Left ventricle myocardium superior (tissue), 1 donor: ENCODE measurements at regions of chr2 and their contacts with region 1.

Region 1: DNA sequence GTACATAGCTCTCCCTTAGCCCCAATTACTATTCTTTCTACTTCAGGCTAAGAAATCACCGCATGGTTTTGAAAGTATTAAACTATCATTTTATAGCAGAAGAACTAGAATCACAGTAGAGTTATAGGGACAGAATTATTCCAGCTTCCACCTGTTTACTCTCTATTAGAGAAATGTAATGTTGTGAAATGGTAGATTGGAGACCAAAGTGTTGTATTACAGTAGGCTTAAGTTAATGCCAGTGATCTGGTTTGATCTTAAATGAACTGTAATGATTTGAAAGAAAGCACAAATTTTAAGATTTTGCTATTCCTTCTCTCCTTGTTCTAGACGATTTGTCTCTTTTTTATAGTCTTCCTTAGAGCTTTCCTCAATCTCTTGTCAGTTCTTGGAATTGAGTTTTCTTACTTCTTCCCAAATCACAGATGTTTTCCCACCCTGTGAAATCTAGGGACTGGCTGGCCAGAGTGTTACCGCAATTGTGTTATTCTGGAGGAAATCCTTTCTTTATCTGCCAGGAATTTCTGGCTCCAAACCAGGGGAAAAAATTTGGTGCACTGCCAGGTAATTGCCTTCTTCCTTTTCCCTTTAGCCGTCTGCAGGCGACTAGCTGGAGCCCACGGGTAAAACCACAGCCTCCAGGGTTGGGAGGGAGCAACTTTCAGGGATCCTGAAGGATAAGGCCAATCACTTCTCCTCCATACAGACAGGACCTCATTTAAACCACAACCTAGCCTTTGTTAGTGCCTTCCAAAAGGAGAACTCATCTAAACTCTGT is 51.7 kb downstream of the NOP58 start:
- DNase-seq: peak; percentile 35
- ATAC-seq: peak; percentile 93

Region 2: GRCh38 chr2:201329409-201329808 is 987.9 kb before region 1 on chr2:
- intact Hi-C with region 1: no loop called
- DNase-seq: no peak
- ATAC-seq: no peak

Region 3: DNA sequence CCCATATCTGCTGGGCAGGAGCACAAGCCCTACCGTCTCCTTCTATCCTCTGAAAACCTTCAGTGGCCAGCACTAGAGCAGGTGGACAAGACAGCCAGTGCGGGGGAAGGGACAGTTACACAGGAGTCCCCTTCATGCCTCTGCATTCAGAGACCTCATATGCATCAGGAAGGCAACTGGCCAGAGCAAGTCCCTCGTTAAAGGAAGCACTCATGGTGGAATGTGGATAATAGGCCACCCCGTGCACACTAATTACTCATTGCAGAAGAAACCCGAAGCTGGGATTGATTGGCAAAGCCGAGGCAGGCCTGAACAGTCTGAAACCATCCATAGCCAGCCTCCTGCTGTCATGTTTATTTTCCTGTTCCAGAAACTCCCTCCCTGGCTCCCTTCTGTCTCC is 233.0 kb before region 1 on chr2:
- intact Hi-C with region 1: no loop called
- DNase-seq: no peak
- ATAC-seq: no peak

Region 4: DNA sequence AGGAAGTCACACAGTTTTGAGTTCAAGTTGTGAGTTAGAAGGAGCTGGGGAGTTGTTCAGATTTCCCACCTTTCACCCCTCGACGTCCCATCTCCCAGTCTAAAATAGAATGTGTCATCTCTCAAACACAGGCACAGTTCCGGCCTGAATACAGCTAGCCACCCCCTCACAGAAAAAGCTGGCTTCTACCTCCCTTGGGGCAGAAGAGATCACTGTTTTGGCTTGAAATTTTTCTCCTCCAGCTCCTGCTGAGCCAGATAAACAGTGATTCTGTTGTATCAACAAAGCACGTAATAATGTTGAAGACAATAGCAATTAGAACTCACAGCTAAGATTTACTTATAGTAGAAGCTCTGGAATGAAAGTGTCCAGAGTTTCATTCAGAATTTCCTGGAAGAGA is 169.5 kb before region 1 on chr2:
- intact Hi-C with region 1: no loop called
- DNase-seq: no peak
- ATAC-seq: peak; percentile 62

Region 5: DNA sequence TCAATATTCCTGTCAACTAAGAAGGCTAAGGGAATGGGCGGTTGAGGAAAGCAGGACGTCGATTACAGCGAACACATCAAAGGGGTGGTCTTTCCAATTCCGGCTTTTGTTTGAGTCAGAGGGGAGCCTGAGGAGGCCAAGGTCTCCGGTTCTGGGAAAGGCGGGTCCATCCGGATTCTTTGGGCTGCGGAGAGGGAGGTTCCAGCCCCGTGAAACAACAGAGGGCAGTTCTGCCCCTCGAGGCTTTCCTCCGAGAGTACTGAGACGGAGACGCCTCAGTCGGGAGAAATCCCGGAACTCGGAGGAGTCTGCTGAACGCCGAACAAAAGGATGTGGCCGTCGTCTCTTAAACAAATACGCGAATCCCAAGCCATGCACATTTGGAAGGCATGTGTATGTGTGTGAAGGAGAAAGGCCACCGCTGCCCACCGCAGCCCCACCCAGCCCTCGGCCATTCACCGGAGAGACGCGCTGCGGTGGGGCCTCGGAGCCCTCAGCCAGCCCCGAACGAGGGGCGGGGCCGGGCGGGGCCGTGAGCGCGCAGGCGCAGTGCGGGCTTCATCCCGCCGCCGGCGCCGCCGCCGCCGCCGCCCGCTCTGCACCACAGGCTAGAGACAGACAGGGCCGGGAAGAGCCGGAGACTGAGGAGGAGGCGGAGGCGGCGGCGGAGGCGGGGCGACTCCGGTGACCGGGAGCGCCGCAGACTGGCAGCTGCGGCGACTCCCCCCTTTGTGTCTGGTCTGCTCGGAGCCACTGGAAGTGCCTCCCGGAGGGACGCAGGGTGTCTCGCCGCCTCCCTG is 58.5 kb after region 1 on chr2 and contains the start of gene BMPR2:
- intact Hi-C with region 1: loop called (anchors 10 kb)
- DNase-seq: peak; percentile 94
- ATAC-seq: peak; percentile 90
- total RNA-seq, gene BMPR2: 50.0 TPM